ENCODE measurements at regions of chr6 and their contacts with region 1.

Region 1: DNA sequence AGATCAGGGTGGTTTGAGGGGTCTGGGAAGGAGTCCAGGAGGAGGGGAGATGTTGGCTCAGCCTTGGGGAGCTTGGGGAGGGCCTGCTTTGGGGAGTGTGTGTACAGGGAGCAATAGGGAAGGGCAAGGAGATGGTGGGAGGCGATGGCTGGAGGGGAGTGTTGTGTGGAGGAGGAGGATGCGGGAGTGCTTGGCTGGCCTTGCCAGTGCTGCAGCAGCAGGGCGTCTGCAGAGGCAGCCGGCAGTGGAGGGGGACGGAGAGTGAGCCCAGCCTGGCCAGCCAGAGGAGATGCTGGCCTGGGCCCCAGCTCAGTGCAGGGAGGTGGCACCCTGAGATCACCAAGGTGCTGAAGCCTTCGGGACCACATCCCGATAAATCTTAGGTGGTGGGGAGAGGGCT is 3.9 kb downstream of the IP6K3 start:
- DNase-seq: no peak
- H3K4me3 ChIP-seq: no peak overlapping the region
- H3K27ac ChIP-seq: no peak overlapping the region
- H3K4me1 ChIP-seq: peaks cover 21% of the 10 kb centered on the region
- H3K27me3 ChIP-seq: no peaks in the 10 kb centered on the region
- CTCF ChIP-seq: no peak

Region 2: GRCh38 chr6:33711140-33712129 is 31.4 kb before region 1 on chr6 and contains the start of gene UQCC2:
- intact Hi-C with region 1: loop called (anchors 2 kb)
- DNase-seq: peak; percentile 97
- H3K4me3 ChIP-seq: peak within 1 kb of the TSS; percentile 68
- H3K27ac ChIP-seq: peak within 1 kb of the TSS; percentile 80
- H3K4me1 ChIP-seq: peaks cover 7% of the 10 kb centered on the region
- H3K27me3 ChIP-seq: no peaks in the 10 kb centered on the region
- CTCF ChIP-seq: peak; percentile 55
- total RNA-seq, gene UQCC2: 45.0 to 81.7 TPM

Region 3: GRCh38 chr6:34358389-34358905 is 615.6 kb after region 1 on chr6:
- intact Hi-C with region 1: no loop called
- DNase-seq: no peak
- H3K4me3 ChIP-seq: no peak overlapping the region
- H3K27ac ChIP-seq: no peak overlapping the region
- H3K4me1 ChIP-seq: no peaks in the 10 kb centered on the region
- H3K27me3 ChIP-seq: no peaks in the 10 kb centered on the region
- CTCF ChIP-seq: no peak